Caco-2 (cell line): ENCODE measurements at regions of chr16 and their contacts with region 1.

Region 1: GRCh38 chr16:9090960-9091866 is at the start of gene HAPSTR1:
- DNase-seq: peak; percentile 98 to 99
- H3K4me3 ChIP-seq: peak within 1 kb of the TSS; percentile 98
- H3K4me3 Mint-ChIP-seq: peak within 1 kb of the TSS; percentile 100
- H3K27ac Mint-ChIP-seq: peak within 1 kb of the TSS; percentile 100
- H3K4me1 ChIP-seq: peaks cover 18% of the 10 kb centered on the region
- H3K4me1 Mint-ChIP-seq: peaks cover 10% of the 10 kb centered on the region
- H3K27me3 ChIP-seq: no peaks in the 10 kb centered on the region
- H3K27me3 Mint-ChIP-seq: no peaks in the 10 kb centered on the region
- CTCF ChIP-seq: no peak
- total RNA-seq, gene HAPSTR1: 42.9 and 47.1 TPM in 2 replicates

Region 2: GRCh38 chr16:8868416-8869211 is 222.6 kb before region 1 on chr16 and contains the start of gene CARHSP1:
- CTCF ChIA-PET with region 1: interaction called, 6 read pairs
- POLR2A ChIA-PET with region 1: interaction called, 15 read pairs
- intact Hi-C with region 1: loop called (anchors 5 kb)
- DNase-seq: peak; percentile 89
- H3K4me3 ChIP-seq: peak within 1 kb of the TSS; percentile 62
- H3K4me3 Mint-ChIP-seq: peak within 1 kb of the TSS; percentile 97
- H3K27ac Mint-ChIP-seq: peak within 1 kb of the TSS; percentile 97
- H3K4me1 ChIP-seq: peaks cover 42% of the 10 kb centered on the region
- H3K4me1 Mint-ChIP-seq: peaks cover 15% of the 10 kb centered on the region
- H3K27me3 ChIP-seq: no peaks in the 10 kb centered on the region
- H3K27me3 Mint-ChIP-seq: no peaks in the 10 kb centered on the region
- CTCF ChIP-seq: no peak
- total RNA-seq, gene CARHSP1: 103 and 105 TPM in 2 replicates

Region 3: DNA sequence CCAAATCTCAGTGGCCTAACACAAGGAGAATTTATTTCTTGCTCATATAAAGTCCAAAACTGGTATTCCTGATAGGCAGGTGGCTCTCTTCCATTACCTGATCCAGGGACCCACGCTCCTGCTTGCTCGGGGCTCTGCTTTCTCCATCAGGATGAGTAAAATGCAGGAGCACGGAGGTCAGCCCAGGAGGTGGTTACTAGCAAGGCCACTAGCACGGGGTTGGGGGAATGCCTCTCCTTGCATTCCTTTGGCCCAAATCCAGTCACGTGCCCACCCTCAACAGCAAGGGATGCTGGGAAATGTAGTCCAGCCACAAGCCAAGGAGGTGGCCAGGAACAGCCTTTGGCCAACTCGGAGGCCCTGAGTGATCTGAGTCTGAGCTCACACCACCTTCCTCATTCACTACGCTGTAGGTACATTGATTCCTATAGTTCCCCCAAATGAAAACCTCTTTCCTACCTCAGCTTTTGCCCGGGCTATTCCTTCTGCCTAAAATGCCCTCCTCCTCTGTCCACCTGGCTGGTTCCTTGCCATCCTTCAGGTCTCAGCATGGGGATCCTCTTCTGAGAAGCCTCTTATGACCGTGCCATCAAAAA is 38.1 kb before region 1 on chr16:
- CTCF ChIA-PET with region 1: no interaction called
- POLR2A ChIA-PET with region 1: no interaction called
- intact Hi-C with region 1: loop called (anchors 5 kb)
- DNase-seq: peak; percentile 85 to 90
- H3K4me3 ChIP-seq: no peak overlapping the region
- H3K4me3 Mint-ChIP-seq: peak overlapping the region; percentile 53
- H3K27ac Mint-ChIP-seq: no peak overlapping the region
- H3K4me1 ChIP-seq: peaks cover 2% of the 10 kb centered on the region; the same call in 1 of the 2 replicates
- H3K4me1 Mint-ChIP-seq: peaks cover 4% of the 10 kb centered on the region
- H3K27me3 ChIP-seq: no peaks in the 10 kb centered on the region
- H3K27me3 Mint-ChIP-seq: no peaks in the 10 kb centered on the region
- CTCF ChIP-seq: no peak

Region 4: DNA sequence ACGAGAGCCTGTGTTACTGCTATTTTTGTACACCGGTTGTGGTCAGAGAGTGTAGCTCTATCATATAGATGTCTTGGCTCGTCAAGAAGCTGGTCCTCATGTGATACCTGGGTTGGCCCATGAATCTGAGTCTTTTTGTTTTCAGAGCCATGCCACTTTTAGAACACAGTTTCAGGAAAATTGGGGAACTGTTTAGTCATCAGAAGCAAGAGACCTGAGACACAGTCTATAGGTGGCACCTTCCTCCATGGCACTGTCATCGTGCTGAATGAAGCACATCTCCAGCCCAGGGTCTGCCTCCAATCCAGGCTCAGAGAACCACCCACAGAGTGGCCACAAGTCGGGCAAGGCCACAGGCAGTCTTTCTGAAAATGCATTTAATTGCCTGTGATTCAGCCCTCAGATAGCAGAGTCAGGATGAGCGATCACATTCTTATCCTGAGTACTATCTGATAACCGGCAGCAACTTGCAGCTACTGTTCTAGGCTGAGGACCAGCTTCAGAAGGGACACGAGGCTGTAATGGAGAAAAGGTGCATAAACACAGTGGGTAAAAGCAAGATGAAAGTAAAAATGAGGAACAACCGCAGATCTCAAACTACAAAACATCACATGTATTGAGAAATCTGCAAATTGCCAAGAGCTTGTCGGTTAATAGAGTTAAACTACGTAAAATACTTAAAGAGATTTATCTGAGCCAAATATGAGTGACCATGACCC is 14.0 kb before region 1 on chr16:
- CTCF ChIA-PET with region 1: no interaction called
- POLR2A ChIA-PET with region 1: interaction called, 12 read pairs
- intact Hi-C with region 1: no loop called
- DNase-seq: no peak
- H3K4me3 ChIP-seq: no peak overlapping the region
- H3K4me3 Mint-ChIP-seq: no peak overlapping the region
- H3K27ac Mint-ChIP-seq: no peak overlapping the region
- H3K4me1 ChIP-seq: 0 out of 2 replicates have a peak, but pooled peaks cover 9% of the 10 kb centered on the region
- H3K4me1 Mint-ChIP-seq: peaks cover 16% of the 10 kb centered on the region
- H3K27me3 ChIP-seq: no peaks in the 10 kb centered on the region
- H3K27me3 Mint-ChIP-seq: peaks cover 3% of the 10 kb centered on the region
- CTCF ChIP-seq: no peak

Region 5: DNA sequence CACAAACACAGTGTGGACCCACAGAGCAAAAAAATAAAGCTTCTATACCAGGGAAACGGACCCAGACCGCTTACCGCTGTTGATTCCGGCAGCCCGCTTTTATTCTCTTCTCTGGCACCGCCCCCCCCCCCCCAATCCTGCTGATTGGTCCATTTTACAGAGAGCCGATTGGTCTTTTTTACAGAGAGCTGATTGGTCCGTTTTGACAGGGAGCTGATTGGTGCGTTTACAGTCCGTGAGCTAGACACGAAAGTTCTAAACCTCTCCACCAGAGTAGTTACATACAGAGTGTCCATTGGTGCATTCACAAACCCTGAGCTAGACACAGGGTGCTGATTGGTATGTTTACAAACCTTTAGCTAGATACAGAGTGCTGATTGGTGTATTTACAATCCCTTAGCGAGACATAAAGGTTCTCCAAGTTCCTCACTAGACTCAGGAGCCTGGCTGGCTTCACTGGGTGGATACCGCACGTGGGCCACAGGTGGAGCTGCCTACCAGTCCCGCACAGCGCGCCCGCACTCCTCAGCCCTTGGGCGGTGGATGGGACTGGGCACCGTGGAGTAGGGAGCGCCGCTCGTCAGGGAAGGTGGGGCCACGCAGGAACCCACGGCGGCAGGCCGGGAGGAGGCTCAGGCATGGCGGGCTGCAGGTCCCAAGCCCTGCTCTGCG is 92.6 kb after region 1 on chr16:
- CTCF ChIA-PET with region 1: no interaction called
- POLR2A ChIA-PET with region 1: no interaction called
- intact Hi-C with region 1: no loop called
- DNase-seq: no peak
- H3K4me3 ChIP-seq: no peak overlapping the region
- H3K4me3 Mint-ChIP-seq: no peak overlapping the region
- H3K27ac Mint-ChIP-seq: no peak overlapping the region
- H3K4me1 ChIP-seq: no peaks in the 10 kb centered on the region
- H3K4me1 Mint-ChIP-seq: no peaks in the 10 kb centered on the region
- H3K27me3 ChIP-seq: no peaks in the 10 kb centered on the region
- H3K27me3 Mint-ChIP-seq: peaks cover 3% of the 10 kb centered on the region
- CTCF ChIP-seq: no peak

Region 6: DNA sequence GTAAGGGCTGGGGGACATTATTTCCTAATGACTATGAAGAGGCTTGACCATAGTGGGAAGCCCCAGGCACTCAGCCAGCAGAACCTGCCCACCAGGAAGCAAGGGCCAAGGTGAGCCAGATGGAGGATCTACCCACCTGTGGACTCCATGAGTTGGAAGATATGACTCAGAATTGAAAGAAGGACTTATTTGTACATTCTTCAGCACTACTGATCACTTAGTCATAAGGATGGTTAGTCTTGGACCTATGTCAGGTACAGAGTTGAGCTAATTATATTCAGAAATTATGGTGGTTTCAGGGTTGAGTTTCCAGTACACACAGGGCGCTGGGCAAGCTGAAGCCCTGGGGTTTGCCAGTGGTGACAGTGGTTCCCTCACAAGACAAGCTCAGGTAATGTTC is 1115.0 kb after region 1 on chr16:
- CTCF ChIA-PET with region 1: no interaction called
- POLR2A ChIA-PET with region 1: no interaction called
- intact Hi-C with region 1: no loop called
- DNase-seq: no peak
- H3K4me3 ChIP-seq: no peak overlapping the region
- H3K4me3 Mint-ChIP-seq: no peak overlapping the region
- H3K27ac Mint-ChIP-seq: no peak overlapping the region
- H3K4me1 ChIP-seq: no peaks in the 10 kb centered on the region
- H3K4me1 Mint-ChIP-seq: peaks cover 7% of the 10 kb centered on the region
- H3K27me3 ChIP-seq: no peaks in the 10 kb centered on the region
- H3K27me3 Mint-ChIP-seq: no peaks in the 10 kb centered on the region
- CTCF ChIP-seq: no peak